GM12878 (cell line): ENCODE measurements at regions of chr5 and their contacts with region 1.

Region 1: DNA sequence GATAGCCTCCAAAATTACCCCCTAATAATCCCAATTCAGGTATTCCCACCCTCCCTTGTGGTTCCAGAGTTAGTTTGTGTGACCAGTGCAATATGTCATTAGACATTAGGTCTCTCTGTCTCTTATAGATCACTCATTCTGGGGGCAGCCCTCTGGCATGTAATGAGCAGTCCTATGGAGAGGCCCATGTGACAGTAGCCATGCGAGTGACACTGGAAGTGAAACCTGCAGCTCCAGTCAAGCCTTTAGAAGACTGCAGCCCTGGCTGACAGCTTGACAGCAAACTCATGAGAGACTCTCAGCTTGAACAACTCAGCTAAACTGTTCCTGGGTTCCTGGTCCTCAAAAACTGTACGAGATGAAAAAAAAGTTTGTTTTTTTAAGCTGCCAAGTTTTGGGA is 54.0 kb upstream of the HSPB3 start:
- DNase-seq: no peak
- ATAC-seq: peak; percentile 96
- H3K4me3 ChIP-seq: no peak overlapping the region
- H3K27ac ChIP-seq: no peak overlapping the region
- H3K4me1 ChIP-seq: peaks cover 5% of the 10 kb centered on the region
- H3K27me3 ChIP-seq: no peaks in the 10 kb centered on the region
- CTCF ChIP-seq: no peak
- EP300 ChIP-seq: no peak
- POLR2A ChIP-seq: no peak
- RAD21 ChIP-seq: no peak

Region 2: DNA sequence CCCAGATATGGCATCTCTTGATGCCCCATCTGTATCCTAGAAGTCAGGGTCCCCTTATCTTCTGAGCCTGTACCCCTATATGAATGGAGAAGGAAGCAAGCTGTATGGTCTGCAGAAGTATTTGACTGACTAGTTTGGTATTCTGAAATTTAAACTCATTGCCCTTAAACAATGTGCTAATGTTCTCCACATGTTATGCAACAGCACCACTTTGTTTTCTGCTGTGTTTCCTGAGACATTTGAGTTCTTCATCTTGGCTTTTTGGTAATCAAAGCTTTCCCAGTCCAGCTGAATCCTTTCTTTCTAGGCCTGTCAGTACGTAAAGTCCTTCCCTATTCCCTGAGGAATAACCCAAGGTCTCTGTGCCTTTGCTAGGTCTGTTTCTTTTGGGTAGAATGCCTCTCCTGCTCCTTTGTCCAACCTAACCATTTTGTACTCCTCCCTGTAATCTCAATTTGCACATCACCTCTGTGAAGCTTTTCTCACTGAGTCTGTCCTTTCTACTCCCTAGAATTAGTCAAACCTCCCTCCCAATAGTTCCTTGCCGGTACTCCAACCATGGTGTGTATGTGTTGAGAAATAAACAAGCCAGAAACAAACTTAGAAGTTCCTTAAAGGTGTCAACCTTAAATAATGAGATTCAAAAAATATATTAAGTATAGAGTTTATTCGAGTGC is 18.2 kb before region 1 on chr5:
- CTCF ChIA-PET with region 1: interaction called, 17 read pairs
- POLR2A ChIA-PET with region 1: interaction called, 24 read pairs
- RAD21 ChIA-PET with region 1: interaction called, 41 read pairs
- SMC1A ChIA-PET with region 1: interaction called, 43 read pairs
- in situ Hi-C with region 1: no loop called
- intact Hi-C with region 1: no loop called
- DNase-seq: no peak
- ATAC-seq: no peak
- H3K4me3 ChIP-seq: no peak overlapping the region
- H3K27ac ChIP-seq: no peak overlapping the region
- H3K4me1 ChIP-seq: no peaks in the 10 kb centered on the region
- H3K27me3 ChIP-seq: no peaks in the 10 kb centered on the region
- CTCF ChIP-seq: no peak
- EP300 ChIP-seq: no peak
- POLR2A ChIP-seq: no peak
- RAD21 ChIP-seq: no peak

Region 3: GRCh38 chr5:54390015-54390414 is 11.5 kb before region 1 on chr5:
- CTCF ChIA-PET with region 1: interaction called, 17 read pairs
- POLR2A ChIA-PET with region 1: interaction called, 30 read pairs
- RAD21 ChIA-PET with region 1: interaction called, 41 read pairs
- SMC1A ChIA-PET with region 1: interaction called, 59 read pairs
- in situ Hi-C with region 1: no loop called
- intact Hi-C with region 1: no loop called
- DNase-seq: no peak
- ATAC-seq: no peak
- H3K4me3 ChIP-seq: no peak overlapping the region
- H3K27ac ChIP-seq: no peak overlapping the region
- H3K4me1 ChIP-seq: no peaks in the 10 kb centered on the region
- H3K27me3 ChIP-seq: no peaks in the 10 kb centered on the region
- CTCF ChIP-seq: no peak
- EP300 ChIP-seq: no peak
- POLR2A ChIP-seq: no peak
- RAD21 ChIP-seq: no peak

Region 4: DNA sequence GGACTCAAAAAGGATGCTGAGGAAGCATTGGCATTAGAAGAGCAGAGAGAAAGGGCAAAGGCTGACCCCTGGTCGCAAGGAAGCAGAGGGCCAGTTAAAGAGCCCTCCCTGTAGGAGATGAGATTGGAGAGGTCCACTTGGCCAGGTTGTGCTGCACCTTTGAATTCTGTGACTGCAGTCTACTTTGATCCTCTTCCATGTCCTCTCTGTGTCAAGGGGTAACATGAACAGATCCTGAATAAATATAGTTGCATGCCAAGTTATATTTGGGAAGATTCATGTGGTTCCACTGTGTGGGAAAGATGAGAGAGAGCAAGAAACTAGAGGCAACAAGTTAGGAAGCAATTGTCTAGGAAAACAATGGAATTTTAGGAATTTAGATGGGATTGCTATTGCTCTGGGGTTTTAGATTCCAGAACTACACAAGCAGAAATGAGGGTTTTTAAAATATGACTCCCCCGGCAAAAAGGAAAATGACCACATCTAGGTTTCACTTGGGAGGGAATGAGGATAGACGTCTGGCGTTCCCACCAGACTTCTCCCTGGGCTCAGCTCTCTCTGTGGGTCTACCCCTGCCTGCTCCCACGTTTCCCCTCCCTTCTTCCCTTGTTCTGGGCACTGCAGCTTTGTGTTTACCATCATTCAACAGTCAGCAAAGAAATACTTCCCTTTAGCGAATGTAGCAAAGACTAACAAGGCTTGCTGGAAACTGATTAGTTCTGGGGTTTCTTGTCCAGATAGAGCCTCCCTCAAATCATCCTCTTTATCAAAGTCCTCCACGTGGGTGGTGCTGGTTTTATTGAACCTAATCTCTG is 179.7 kb after region 1 on chr5:
- CTCF ChIA-PET with region 1: no interaction called
- POLR2A ChIA-PET with region 1: no interaction called
- RAD21 ChIA-PET with region 1: no interaction called
- SMC1A ChIA-PET with region 1: no interaction called
- in situ Hi-C with region 1: no loop called
- intact Hi-C with region 1: no loop called
- DNase-seq: no peak
- ATAC-seq: no peak
- H3K4me3 ChIP-seq: no peak overlapping the region
- H3K27ac ChIP-seq: no peak overlapping the region
- H3K4me1 ChIP-seq: no peaks in the 10 kb centered on the region
- H3K27me3 ChIP-seq: peaks cover 1 to 2% of the 10 kb centered on the region in 2 experiments; a peak in 1 of 4 replicates
- CTCF ChIP-seq: no peak
- EP300 ChIP-seq: no peak
- POLR2A ChIP-seq: no peak
- RAD21 ChIP-seq: no peak